Caco-2 (cell line): ENCODE measurements at regions of chr2 and their contacts with region 1.

Region 1: GRCh38 chr2:209960676-209961630 is 41.5 kb upstream of the RPE start:
- DNase-seq: peak; percentile 52 to 55
- H3K4me3 ChIP-seq: no peak overlapping the region
- H3K4me3 Mint-ChIP-seq: no peak overlapping the region
- H3K27ac Mint-ChIP-seq: no peak overlapping the region
- H3K4me1 ChIP-seq: no peaks in the 10 kb centered on the region
- H3K4me1 Mint-ChIP-seq: no peaks in the 10 kb centered on the region
- H3K27me3 ChIP-seq: no peaks in the 10 kb centered on the region
- H3K27me3 Mint-ChIP-seq: no peaks in the 10 kb centered on the region
- CTCF ChIP-seq: peak; percentile 64 to 76

Region 2: DNA sequence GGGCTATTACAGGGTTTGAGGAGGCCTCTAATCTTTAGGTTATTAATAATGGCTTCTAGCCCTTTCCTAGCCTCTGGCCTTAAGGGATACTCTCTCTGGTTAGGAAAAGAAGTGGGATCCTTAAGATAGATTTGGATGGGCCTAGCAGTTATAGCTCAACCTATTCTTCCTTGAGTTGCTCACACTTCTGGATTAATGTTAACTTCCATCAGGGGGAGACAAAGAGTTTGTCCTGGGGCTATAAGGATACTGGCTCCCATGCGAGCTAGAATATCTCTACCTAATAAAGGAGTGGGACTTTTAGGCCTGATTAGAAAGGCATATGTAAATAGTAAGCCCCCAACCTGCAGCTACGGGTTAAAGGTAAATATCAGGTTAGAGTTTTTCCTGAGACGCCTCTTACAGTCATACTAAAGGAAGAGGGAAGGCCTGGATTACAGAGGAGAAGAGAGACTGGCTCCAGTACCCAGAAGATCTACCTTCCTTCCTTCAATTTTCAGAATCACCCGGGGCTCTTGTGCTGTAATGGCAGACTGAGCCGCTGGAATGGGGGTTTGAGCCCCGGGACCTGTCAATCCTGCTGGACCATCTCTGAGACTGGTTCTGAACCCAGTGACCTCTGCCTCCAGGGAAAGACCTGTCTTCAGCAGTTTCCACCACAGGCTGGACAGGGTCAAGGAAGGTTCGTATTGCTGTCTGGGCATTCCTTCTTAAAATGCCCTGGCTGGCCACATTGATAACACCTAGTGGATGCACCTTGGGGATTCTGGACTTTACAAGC is 1568.5 kb before region 1 on chr2:
- CTCF ChIA-PET with region 1: no interaction called
- POLR2A ChIA-PET with region 1: no interaction called
- intact Hi-C with region 1: loop called (anchors 2 kb)
- DNase-seq: no peak
- H3K4me3 ChIP-seq: no peak overlapping the region
- H3K4me3 Mint-ChIP-seq: no peak overlapping the region
- H3K27ac Mint-ChIP-seq: no peak overlapping the region
- H3K4me1 ChIP-seq: no peaks in the 10 kb centered on the region
- H3K4me1 Mint-ChIP-seq: no peaks in the 10 kb centered on the region
- H3K27me3 ChIP-seq: no peaks in the 10 kb centered on the region
- H3K27me3 Mint-ChIP-seq: peaks cover 3% of the 10 kb centered on the region
- CTCF ChIP-seq: no peak

Region 3: DNA sequence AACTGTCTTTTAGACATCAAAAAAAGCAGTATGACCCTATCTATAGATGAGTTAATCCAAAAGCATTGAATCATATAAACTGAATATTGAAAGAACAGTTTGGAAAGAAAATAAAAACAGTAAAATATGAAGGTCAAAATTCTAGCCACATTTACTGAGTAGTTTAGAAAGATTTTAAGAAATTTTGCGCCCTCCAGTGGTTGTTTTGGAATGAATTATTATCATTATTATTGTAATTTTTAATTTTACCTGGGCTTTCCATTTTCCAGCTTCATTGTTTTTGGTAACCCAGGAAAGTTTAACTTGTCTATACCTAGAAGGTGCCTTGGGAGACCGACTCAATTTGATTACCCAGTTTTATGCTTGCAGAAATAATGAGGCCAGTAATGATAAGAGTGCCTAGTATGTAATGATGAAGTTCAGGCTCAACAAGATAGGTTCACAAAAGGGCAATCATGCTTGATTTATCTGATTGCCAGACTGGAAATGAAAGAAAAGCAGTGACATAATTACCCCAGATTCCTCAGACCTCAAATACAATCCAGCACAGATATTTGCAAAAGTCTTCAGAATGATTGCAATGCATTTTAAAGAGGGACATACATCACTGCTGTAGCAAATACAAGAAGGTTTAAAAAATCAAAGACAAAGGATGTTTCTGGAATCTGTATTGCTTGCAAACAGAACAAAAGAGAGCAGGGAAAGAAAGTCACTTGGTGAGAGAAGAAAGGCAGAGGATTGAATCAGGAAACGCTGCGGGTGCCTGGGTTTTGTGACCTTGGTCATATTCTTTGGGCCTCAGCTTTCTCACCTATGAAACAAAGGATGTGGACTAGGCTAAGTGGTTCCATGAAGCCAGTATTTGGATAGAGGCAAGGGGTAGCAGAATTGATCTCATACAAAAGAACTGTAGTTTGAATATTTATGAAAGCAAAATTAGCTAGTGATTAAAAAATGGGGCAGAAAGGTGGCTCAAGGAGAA is 383.3 kb before region 1 on chr2:
- CTCF ChIA-PET with region 1: no interaction called
- POLR2A ChIA-PET with region 1: no interaction called
- intact Hi-C with region 1: loop called (anchors 10 kb)
- DNase-seq: no peak
- H3K4me3 ChIP-seq: no peak overlapping the region
- H3K4me3 Mint-ChIP-seq: no peak overlapping the region
- H3K27ac Mint-ChIP-seq: no peak overlapping the region
- H3K4me1 ChIP-seq: no peaks in the 10 kb centered on the region
- H3K4me1 Mint-ChIP-seq: no peaks in the 10 kb centered on the region
- H3K27me3 ChIP-seq: no peaks in the 10 kb centered on the region
- H3K27me3 Mint-ChIP-seq: peaks cover 4% of the 10 kb centered on the region
- CTCF ChIP-seq: peak in 1 of 2 experiments; percentile 2

Region 4: GRCh38 chr2:209629597-209629996 is 331.4 kb before region 1 on chr2:
- CTCF ChIA-PET with region 1: no interaction called
- POLR2A ChIA-PET with region 1: no interaction called
- intact Hi-C with region 1: no loop called
- DNase-seq: no peak
- H3K4me3 ChIP-seq: no peak overlapping the region
- H3K4me3 Mint-ChIP-seq: no peak overlapping the region
- H3K27ac Mint-ChIP-seq: no peak overlapping the region
- H3K4me1 ChIP-seq: no peaks in the 10 kb centered on the region
- H3K4me1 Mint-ChIP-seq: no peaks in the 10 kb centered on the region
- H3K27me3 ChIP-seq: no peaks in the 10 kb centered on the region
- H3K27me3 Mint-ChIP-seq: peaks cover 17% of the 10 kb centered on the region
- CTCF ChIP-seq: no peak

Region 5: DNA sequence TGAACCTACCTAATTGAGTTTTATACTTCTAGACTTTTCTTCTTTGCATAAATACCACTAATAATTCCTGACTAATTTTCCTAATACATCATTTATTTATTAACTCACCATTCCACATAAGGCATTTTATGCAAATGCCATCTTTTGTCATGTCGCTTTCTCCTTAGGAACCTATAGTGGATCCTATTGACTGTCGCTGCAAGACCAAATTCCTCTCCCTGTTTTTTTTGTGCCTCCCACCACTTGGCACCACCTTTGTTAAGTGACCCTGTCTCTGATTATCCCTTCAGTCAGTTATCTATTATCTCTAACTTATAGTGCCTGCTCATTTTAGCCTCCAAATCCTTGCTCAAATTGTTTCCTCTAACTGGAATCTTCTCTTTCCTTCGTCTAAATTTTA is 169.8 kb before region 1 on chr2:
- CTCF ChIA-PET with region 1: interaction called, 3 read pairs
- POLR2A ChIA-PET with region 1: no interaction called
- intact Hi-C with region 1: loop called (anchors 1 kb)
- DNase-seq: no peak
- H3K4me3 ChIP-seq: no peak overlapping the region
- H3K4me3 Mint-ChIP-seq: no peak overlapping the region
- H3K27ac Mint-ChIP-seq: no peak overlapping the region
- H3K4me1 ChIP-seq: no peaks in the 10 kb centered on the region
- H3K4me1 Mint-ChIP-seq: peaks cover 2% of the 10 kb centered on the region
- H3K27me3 ChIP-seq: no peaks in the 10 kb centered on the region
- H3K27me3 Mint-ChIP-seq: no peaks in the 10 kb centered on the region
- CTCF ChIP-seq: no peak

Region 6: DNA sequence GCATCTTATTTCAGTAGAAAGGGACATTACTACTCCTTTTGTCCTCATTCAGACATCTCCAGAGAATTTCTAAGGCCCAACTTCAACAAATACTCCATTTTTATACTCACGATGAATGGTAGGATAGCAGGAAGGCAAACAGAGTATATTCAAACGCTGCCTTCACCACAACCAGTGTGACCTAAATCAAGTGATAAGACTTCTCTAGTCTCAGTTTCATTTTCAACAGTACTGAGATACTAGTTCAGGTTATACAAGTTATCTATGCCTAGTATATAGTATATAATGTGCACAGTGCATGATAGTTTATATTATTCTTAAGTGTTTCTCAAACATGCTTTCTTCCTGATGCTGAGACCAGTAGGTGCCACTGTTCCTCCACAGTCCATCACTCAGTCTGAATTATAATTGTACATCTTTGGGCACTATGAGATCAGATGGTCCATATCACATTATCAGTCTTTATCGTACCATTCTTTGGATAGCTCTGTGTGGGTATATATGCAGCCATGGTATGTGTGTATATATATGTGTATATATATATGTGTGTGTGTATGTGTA is 24.8 kb before region 1 on chr2:
- CTCF ChIA-PET with region 1: no interaction called
- POLR2A ChIA-PET with region 1: no interaction called
- intact Hi-C with region 1: loop called (anchors 1 kb)
- DNase-seq: no peak
- H3K4me3 ChIP-seq: no peak overlapping the region
- H3K4me3 Mint-ChIP-seq: no peak overlapping the region
- H3K27ac Mint-ChIP-seq: no peak overlapping the region
- H3K4me1 ChIP-seq: no peaks in the 10 kb centered on the region
- H3K4me1 Mint-ChIP-seq: no peaks in the 10 kb centered on the region
- H3K27me3 ChIP-seq: no peaks in the 10 kb centered on the region
- H3K27me3 Mint-ChIP-seq: peaks cover 16% of the 10 kb centered on the region
- CTCF ChIP-seq: no peak

Region 7: DNA sequence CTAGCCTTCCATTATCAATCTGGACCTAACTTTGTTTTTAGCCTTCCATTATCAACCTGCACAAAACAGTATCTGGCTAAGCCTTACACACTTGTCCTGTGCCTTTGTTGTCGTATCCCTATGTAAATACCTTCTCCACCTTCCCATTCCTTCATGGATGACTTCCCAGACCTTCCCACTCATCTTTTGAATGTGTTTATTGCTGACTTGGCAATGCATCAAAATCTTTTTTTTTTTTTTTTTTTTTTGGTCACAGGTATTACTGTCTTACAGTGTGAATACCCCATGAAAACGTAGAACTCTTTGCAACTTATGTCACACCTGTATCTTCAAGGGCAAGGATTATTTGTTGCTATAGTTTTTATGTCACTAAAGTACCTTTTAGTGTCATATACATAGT is 67.2 kb after region 1 on chr2:
- CTCF ChIA-PET with region 1: no interaction called
- POLR2A ChIA-PET with region 1: no interaction called
- intact Hi-C with region 1: no loop called
- DNase-seq: no peak
- H3K4me3 ChIP-seq: no peak overlapping the region
- H3K4me3 Mint-ChIP-seq: no peak overlapping the region
- H3K27ac Mint-ChIP-seq: no peak overlapping the region
- H3K4me1 ChIP-seq: no peaks in the 10 kb centered on the region
- H3K4me1 Mint-ChIP-seq: peaks cover 7% of the 10 kb centered on the region
- H3K27me3 ChIP-seq: no peaks in the 10 kb centered on the region
- H3K27me3 Mint-ChIP-seq: peaks cover 4% of the 10 kb centered on the region
- CTCF ChIP-seq: no peak

Region 8: GRCh38 chr2:210046851-210047500 is 86.0 kb after region 1 on chr2:
- CTCF ChIA-PET with region 1: no interaction called
- POLR2A ChIA-PET with region 1: no interaction called
- intact Hi-C with region 1: no loop called
- DNase-seq: no peak
- H3K4me3 ChIP-seq: no peak overlapping the region
- H3K4me3 Mint-ChIP-seq: no peak overlapping the region
- H3K27ac Mint-ChIP-seq: no peak overlapping the region
- H3K4me1 ChIP-seq: peaks cover 7% of the 10 kb centered on the region; the same call in 1 of the 2 replicates
- H3K4me1 Mint-ChIP-seq: no peaks in the 10 kb centered on the region
- H3K27me3 ChIP-seq: no peaks in the 10 kb centered on the region
- H3K27me3 Mint-ChIP-seq: no peaks in the 10 kb centered on the region
- CTCF ChIP-seq: no peak